ENCODE measurements at regions of chr19 and their contacts with region 1.

Region 1: DNA sequence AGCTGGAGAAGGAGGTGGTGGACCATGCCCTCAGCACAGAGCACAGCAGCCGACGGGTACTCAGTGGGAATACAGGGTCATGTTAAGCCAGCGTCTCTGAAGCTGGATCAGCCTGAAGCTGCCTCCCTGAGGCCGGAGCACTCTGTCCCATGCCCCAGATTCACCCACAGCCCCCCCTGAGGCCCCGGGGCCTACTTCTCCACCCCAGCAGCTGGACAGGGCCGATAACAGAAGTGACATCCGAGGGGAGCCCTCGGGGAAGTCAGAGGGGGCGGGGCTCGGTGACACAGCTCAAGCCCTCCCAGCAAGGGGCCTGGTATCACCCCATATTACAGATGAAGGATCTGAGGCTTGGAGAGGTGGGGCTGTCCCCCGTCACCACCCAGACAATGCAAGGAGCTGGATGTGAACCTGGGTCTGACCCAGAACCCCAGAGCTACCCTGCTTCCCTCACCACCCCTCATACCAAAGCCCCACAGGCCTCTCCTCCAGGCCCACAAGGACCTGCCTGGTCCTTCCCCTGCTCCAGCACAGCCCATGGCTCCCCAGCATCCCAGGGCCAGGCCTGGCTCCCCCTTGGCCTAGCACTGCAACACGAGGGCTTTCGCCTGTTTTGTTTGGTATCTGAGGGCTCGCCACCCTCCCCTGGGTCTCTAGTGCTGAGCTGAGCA is 5.7 kb downstream of the R3HDM4 start:
- DNase-seq: no peak
- H3K4me3 Mint-ChIP-seq: no peak overlapping the region
- H3K27ac Mint-ChIP-seq: peak overlapping the region; percentile 98
- H3K4me1 Mint-ChIP-seq: peaks cover 57% of the 10 kb centered on the region
- H3K27me3 Mint-ChIP-seq: no peaks in the 10 kb centered on the region

Region 2: GRCh38 chr19:872266-872951 is 34.9 kb before region 1 on chr19:
- CTCF ChIA-PET with region 1: interaction called, 3 read pairs
- POLR2A ChIA-PET with region 1: interaction called, 16 read pairs
- DNase-seq: peak; percentile 91
- H3K4me3 Mint-ChIP-seq: peak overlapping the region; percentile 71
- H3K27ac Mint-ChIP-seq: peak overlapping the region; percentile 89
- H3K4me1 Mint-ChIP-seq: peaks cover 11% of the 10 kb centered on the region
- H3K27me3 Mint-ChIP-seq: no peaks in the 10 kb centered on the region

Region 3: GRCh38 chr19:892243-893050 is 14.9 kb before region 1 on chr19:
- CTCF ChIA-PET with region 1: interaction called, 17 read pairs
- POLR2A ChIA-PET with region 1: interaction called, 79 read pairs
- DNase-seq: no peak
- H3K4me3 Mint-ChIP-seq: peak overlapping the region; percentile 82
- H3K27ac Mint-ChIP-seq: peak overlapping the region; percentile 78
- H3K4me1 Mint-ChIP-seq: peaks cover 19% of the 10 kb centered on the region
- H3K27me3 Mint-ChIP-seq: no peaks in the 10 kb centered on the region

Region 4: DNA sequence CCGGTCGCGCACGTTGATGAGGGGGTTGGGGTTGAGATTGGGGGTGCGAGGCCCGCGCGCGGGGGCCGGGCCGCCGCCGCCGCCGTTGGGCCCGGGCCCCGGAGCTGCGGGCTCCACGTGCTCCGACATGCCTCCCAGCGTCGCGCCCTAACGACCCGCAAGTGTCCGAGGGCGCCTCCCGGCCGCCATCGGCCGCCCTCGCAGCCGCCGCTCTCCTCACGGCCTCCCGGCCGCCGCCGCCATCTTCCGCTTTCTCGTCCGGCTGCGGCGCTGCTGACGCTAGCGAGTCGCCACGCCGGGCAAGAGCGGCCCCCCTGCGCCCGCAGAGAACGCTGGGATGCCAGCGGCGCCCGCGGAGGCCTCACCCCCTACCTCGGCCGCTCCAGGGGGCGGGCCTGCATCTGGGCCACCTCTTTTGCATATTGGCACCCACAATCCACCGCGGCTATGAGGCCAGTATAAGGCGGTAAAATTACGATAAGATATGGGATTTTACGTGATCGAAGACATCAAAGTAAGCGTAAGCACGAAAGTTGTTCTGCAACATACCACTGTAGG is 113.6 kb after region 1 on chr19 and contains the start of gene TMEM259:
- CTCF ChIA-PET with region 1: no interaction called
- POLR2A ChIA-PET with region 1: no interaction called
- DNase-seq: peak; percentile 98
- H3K4me3 Mint-ChIP-seq: peak within 1 kb of the TSS; percentile 91
- H3K27ac Mint-ChIP-seq: peak within 1 kb of the TSS; percentile 92
- H3K4me1 Mint-ChIP-seq: peaks cover 47% of the 10 kb centered on the region
- H3K27me3 Mint-ChIP-seq: no peaks in the 10 kb centered on the region
- total RNA-seq, gene TMEM259: 181 TPM